ENCODE measurements at regions of chr6 and their contacts with region 1.

Region 1: DNA sequence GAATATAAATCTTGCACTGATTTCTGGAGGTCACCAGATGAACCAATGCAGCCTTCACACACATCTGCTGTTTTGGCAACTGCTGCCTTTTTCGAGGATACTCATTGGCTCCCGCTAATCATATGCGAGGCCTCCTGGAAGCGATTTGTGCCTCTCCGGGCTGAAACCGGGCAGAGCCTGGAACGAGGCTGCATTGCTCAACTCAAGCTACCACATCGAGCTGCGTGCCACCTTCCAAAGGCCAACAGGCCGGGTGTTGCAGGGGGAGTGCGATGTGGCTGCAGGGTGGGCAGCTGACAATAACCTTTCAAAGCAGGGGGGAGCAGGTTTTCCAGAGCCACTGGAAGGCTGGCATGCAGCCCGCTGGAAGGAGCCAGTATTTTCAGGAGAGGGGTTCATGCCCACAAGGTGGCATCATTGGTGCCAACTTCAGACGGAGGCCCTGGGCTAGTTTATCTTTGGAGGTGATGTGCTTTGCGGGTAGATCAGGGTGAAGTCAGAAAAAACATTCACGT is 122.6 kb upstream of the IFNGR1 start:
- DNase-seq: peak; percentile 66
- ATAC-seq: peak; percentile 51
- H3K4me3 Mint-ChIP-seq: peak overlapping the region; percentile 9
- H3K27ac Mint-ChIP-seq: no peak overlapping the region
- H3K4me1 Mint-ChIP-seq: peaks cover 12% of the 10 kb centered on the region
- H3K27me3 Mint-ChIP-seq: peaks cover 9% of the 10 kb centered on the region

Region 2: GRCh38 chr6:136967876-136968752 is 373.6 kb before region 1 on chr6:
- CTCF ChIA-PET with region 1: no interaction called
- DNase-seq: peak; percentile 78
- ATAC-seq: peak; percentile 96
- H3K4me3 Mint-ChIP-seq: no peak overlapping the region
- H3K27ac Mint-ChIP-seq: no peak overlapping the region
- H3K4me1 Mint-ChIP-seq: peaks cover 5% of the 10 kb centered on the region
- H3K27me3 Mint-ChIP-seq: peaks cover 52% of the 10 kb centered on the region

Region 3: GRCh38 chr6:137258170-137258569 is 83.6 kb before region 1 on chr6:
- CTCF ChIA-PET with region 1: no interaction called
- DNase-seq: no peak
- ATAC-seq: peak; percentile 27
- H3K4me3 Mint-ChIP-seq: no peak overlapping the region
- H3K27ac Mint-ChIP-seq: no peak overlapping the region
- H3K4me1 Mint-ChIP-seq: peaks cover 18% of the 10 kb centered on the region
- H3K27me3 Mint-ChIP-seq: peaks cover 8% of the 10 kb centered on the region

Region 4: DNA sequence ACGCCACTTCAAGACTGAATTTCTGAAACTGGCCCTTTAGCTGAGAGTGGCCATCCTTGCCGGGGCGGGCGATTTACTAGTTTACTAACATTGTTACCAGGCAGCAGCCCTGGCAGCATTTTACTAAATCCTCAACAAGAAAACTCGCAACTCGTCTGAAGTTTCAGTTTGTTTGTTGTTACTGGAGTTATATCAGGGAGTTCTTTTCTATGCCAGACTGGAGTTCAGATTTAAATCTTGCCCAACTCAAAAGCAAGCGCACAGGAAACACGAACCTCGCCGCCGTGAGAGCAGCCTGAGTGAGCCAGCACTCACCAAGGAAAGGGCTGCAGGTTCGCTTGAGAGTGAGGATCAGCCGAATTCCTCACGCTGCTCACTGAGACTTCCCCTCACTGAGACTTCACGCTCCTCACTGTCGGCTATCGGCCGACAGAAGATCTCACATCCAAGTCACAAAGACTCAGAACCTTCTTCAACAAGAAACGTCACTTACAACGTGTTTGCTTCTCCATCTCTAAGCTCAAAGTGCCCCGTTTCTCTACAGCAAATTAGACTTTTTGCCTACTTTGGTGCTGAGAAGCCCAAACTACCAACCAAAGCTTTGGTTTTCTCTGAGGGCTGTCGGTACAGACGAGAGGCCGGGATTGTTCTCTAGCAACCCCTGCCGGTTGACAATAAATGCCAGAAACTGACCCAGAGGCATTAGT is 73.5 kb after region 1 on chr6:
- CTCF ChIA-PET with region 1: interaction called, 50 read pairs
- DNase-seq: peak; percentile 79
- ATAC-seq: peak; percentile 98
- H3K4me3 Mint-ChIP-seq: peak overlapping the region; percentile 73
- H3K27ac Mint-ChIP-seq: peak overlapping the region; percentile 40
- H3K4me1 Mint-ChIP-seq: peaks cover 8% of the 10 kb centered on the region
- H3K27me3 Mint-ChIP-seq: peaks cover 7% of the 10 kb centered on the region

Region 5: DNA sequence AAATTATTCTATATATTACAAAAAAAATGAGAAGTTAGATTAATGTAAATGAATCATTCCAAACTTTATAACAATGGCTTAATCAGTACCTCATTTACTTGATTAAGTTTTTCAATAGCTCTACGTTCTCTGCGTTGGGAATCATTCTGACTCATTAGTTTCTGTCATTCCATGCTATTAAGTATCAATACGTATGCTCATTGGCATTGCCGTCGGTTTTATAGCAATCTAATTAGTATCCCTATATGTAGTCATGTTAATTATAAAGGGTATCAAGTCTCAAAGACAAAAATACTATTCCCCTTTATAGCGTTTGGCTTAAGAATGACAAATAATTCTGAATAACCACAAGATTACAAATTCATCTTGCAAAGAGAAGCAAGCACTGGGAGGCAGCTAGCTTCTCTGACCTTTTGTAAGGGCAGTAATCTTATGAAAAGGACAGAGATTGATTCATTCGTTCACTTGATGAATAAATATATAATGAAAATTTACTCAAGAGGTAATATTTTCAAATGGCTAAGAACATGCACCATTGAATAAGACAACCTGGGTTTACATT is 110.7 kb after region 1 on chr6:
- CTCF ChIA-PET with region 1: no interaction called
- DNase-seq: no peak
- ATAC-seq: no peak
- H3K4me3 Mint-ChIP-seq: no peak overlapping the region
- H3K27ac Mint-ChIP-seq: no peak overlapping the region
- H3K4me1 Mint-ChIP-seq: no peaks in the 10 kb centered on the region
- H3K27me3 Mint-ChIP-seq: peaks cover 11% of the 10 kb centered on the region

Measured in activated CD8-positive, alpha-beta memory T cell treated with anti-CD3 and anti-CD28 coated beads, Interleukin-2, amount 10 ng/mL, durations not matched to agents 7 days and 5 days (primary cell).